CD14-positive monocyte (primary cell): ENCODE measurements at regions of chr4 and their contacts with region 1.

Region 1: GRCh38 chr4:84503495-84504437 is 4.7 kb upstream of the NKX6-1 start:
- DNase-seq: peak; percentile 22 to 56 (median 48)
- H3K4me3 ChIP-seq: no peak overlapping the region
- H3K4me3 Mint-ChIP-seq: peak overlapping the region in 1 of 2 donors; percentile 83
- H3K27ac ChIP-seq: no peak overlapping the region
- H3K27ac Mint-ChIP-seq: no peak overlapping the region
- H3K4me1 ChIP-seq: peaks cover 12% of the 10 kb centered on the region in 2 donors
- H3K4me1 Mint-ChIP-seq: peaks cover 22% of the 10 kb centered on the region
- H3K27me3 ChIP-seq: peaks cover 91 to 96% of the 10 kb centered on the region in 2 donors
- H3K27me3 Mint-ChIP-seq: peaks cover 74 to 81% (median 78%) of the 10 kb centered on the region in 3 donors
- CTCF ChIP-seq: peak; percentile 75

Region 2: DNA sequence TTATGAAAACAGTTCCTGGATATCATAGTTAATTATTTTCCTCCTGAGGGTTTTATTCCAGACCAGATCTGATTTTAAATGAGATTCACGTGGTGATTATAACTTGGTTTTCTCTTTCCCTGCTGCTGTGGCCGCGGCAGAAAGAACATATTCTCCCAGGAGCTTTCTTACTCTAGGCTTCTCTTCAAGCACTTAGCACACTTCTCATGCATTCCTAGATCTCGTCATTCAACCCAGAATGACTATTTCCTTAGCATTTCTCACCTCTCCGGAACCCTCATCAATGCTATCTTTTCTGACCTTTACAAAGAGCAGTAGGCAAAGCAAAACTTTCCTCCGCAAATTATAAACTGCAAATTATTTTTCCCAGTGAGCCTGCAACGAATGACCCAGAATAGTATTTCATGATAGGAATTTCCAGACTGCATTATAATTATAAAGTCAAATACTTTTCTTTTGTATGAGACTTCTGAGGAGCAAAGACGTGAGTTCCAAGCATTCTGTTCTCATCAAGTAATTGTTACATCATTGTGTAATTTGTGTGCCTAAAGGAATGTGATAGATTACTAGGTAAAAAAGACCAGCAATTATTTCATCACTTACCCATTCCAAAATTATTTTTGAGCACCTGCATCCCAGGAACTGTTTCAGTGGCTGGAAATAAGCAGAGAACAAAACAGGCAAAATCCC is 844.8 kb before region 1 on chr4:
- intact Hi-C with region 1: loop called in 1 of 2 experiments (anchors 10 kb)
- DNase-seq: no peak
- H3K4me3 ChIP-seq: no peak overlapping the region
- H3K4me3 Mint-ChIP-seq: no peak overlapping the region
- H3K27ac ChIP-seq: no peak overlapping the region
- H3K27ac Mint-ChIP-seq: no peak overlapping the region
- H3K4me1 ChIP-seq: no peaks in the 10 kb centered on the region
- H3K4me1 Mint-ChIP-seq: no peaks in the 10 kb centered on the region
- H3K27me3 ChIP-seq: no peaks in the 10 kb centered on the region
- H3K27me3 Mint-ChIP-seq: peaks cover 0 to 6% (median 1%) of the 10 kb centered on the region in 3 donors
- CTCF ChIP-seq: no peak